ENCODE measurements at regions of chr14 and their contacts with region 1.

Region 1: GRCh38 chr14:37903343-37904191 is 304.1 kb upstream of the SSTR1 start:
- DNase-seq: no peak
- ATAC-seq: no peak
- H3K4me3 Mint-ChIP-seq: no peak overlapping the region
- H3K27ac Mint-ChIP-seq: no peak overlapping the region
- H3K4me1 Mint-ChIP-seq: no peaks in the 10 kb centered on the region
- H3K27me3 Mint-ChIP-seq: peaks cover 13% of the 10 kb centered on the region

Region 2: GRCh38 chr14:37969511-37969979 is 66.0 kb after region 1 on chr14:
- CTCF ChIA-PET with region 1: no interaction called
- POLR2A ChIA-PET with region 1: no interaction called
- DNase-seq: no peak
- ATAC-seq: no peak
- H3K4me3 Mint-ChIP-seq: no peak overlapping the region
- H3K27ac Mint-ChIP-seq: no peak overlapping the region
- H3K4me1 Mint-ChIP-seq: peaks cover 2% of the 10 kb centered on the region
- H3K27me3 Mint-ChIP-seq: no peaks in the 10 kb centered on the region

Region 3: DNA sequence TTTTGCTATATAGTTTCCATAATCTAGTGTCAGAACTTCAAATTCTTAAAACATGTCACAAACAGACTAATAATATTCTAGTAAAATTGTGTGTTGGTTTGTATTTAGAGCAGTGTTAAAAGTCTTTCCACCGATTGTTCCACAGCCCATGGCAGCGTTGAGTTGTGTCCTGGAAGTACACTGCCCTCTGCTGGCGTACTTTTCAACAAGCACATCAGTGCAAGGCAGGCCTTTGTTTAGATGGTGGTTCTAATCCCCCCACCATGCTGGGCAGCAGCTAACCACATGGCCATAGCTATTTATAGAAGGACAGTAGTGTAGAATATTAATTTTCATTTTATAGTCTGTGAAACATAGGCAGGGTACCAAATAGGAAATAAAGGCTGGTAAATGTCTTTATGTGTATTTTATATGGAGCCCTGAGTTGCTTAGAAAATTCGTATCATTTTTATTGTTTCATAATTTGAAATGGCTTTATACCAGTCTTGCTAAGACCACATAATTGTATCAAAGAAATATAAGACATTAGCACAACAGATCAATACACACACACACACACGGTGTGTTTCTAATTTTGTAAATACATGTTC is 964.1 kb after region 1 on chr14:
- CTCF ChIA-PET with region 1: interaction called, 11 read pairs
- POLR2A ChIA-PET with region 1: no interaction called
- DNase-seq: peak; percentile 73
- ATAC-seq: peak; percentile 72
- H3K4me3 Mint-ChIP-seq: no peak overlapping the region
- H3K27ac Mint-ChIP-seq: no peak overlapping the region
- H3K4me1 Mint-ChIP-seq: no peaks in the 10 kb centered on the region
- H3K27me3 Mint-ChIP-seq: peaks cover 4% of the 10 kb centered on the region